ACHN (cell line): ENCODE measurements at regions of chr18 and their contacts with region 1.

Region 1: GRCh38 chr18:59988098-59988706 is 88.4 kb downstream of the PMAIP1 start:
- DNase-seq: peak; percentile 44

Region 2: GRCh38 chr18:60554967-60555366 is 566.8 kb after region 1 on chr18:
- in situ Hi-C with region 1: loop called (anchors 25 kb)
- DNase-seq: no peak